Posterior cingulate gyrus (tissue), 11 donors: ENCODE measurements at regions of chr15 and their contacts with region 1.

Region 1: GRCh38 chr15:84600851-84601838 is at the start of gene ZSCAN2:
- DNase-seq: peak; percentile 94 to 100 (median 97)

Region 2: DNA sequence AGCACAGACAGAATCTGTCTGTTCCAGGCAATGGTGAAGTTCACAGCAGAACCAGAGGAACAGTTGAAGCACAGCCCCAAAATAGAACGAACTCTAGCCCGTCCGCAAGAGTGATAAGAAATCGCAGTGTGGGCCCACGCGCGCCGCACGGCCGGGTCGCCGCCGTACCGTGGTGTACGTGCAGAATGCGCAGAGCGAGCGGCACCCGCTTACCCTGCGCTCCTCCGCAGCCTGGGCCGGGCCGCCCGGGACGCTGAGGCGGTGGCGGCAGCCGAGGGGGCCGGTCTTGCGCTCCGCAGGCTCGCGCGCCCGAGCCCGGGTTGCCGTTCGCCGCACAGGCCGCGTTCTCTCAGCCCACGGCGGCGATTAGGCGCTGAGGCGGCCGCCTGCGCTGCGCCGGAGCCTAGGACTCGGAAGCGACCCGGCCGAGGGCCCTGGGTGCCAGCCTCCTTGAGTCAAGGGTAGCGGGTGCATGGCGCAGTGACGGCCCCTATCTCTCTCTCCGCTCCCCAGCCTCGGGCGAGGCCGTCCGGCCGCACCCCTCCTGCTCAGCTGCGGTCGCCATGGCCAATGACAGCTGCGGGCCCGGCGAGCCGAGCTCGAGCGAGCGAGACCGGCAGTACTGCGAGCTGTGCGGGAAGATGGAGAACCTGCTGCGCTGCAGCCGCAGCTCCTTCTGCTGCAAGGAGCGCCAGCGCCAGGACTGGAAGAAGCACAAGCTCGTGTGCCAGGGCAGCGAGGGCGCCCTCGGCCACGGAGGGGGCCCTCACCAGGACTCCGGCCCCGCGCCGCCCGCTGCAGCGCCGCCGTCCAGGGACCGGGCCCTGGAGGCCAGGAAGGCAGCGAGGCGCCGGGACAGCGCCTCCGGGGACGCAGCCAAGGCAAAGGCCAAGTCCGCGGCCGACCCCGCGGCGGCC is 32.4 kb after region 1 on chr15:
- intact Hi-C with region 1: loop called (anchors 2 kb)
- DNase-seq: peak; percentile 41 to 94 (median 65)

Region 3: GRCh38 chr15:84876269-84876668 is 275.1 kb after region 1 on chr15:
- intact Hi-C with region 1: loop called (anchors 2 kb)
- DNase-seq: no peak

Region 4: GRCh38 chr15:84981054-84981710 is 380.0 kb after region 1 on chr15:
- intact Hi-C with region 1: loop called (anchors 5 kb)
- DNase-seq: peak; percentile 87 to 99 (median 92)